Posterior vena cava (tissue), 2 donors: ENCODE measurements at regions of chr5 and their contacts with region 1.

Region 1: GRCh38 chr5:86404256-86404655 is 213.5 kb upstream of the COX7C start:
- DNase-seq: no peak

Region 2: GRCh38 chr5:86427158-86427557 is 22.9 kb after region 1 on chr5:
- intact Hi-C with region 1: loop called in 1 of 2 experiments (anchors 1 kb)
- DNase-seq: no peak